WTC11 (cell line): ENCODE measurements at regions of chr9 and their contacts with region 1.

Region 1: DNA sequence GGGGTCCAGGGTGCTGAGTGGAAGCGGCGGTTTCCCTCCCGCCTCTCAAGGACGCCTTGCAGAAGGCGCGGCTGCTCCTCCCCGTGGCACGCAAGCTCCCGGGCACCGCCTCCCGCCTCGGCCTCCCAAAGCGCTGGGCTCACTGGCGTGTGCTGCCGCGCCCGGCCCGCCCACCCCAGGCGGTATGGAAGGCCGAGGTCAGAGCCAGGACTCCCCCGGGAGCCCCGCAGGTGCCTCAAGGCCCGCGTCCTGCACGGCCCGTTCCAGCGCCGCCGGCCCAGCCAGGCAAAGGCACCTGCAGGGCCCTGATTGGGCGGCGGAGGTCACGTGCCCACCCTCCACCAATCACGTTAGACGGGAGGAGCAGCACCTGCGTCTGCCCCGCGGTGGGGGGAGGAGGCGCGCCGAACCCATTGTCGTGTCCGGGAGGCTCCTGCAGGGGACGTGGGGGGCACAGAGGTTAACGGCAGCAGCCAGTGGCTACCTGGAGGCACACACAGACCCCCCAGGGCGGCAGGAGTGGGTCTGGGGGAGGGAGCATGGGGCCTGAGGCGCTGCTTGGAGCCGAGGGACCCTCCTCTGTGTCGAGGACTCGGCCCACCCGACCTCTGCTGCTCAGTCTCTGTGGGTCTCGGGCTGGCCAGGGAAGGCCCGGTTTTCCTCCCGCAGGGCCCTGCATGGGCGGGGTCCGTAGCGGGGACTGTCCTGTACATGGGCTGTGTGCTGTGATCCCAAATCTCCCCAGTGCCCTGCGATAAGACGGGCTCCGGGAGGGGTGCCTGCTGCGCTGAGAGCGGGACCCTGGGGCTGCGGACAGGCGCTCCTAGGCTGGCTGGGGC is 2.0 kb upstream of the LCN12 start:
- DNase-seq: peak; percentile 97
- ATAC-seq: peak; percentile 81
- H3K4me3 Mint-ChIP-seq: peak overlapping the region; percentile 72
- H3K27ac Mint-ChIP-seq: no peak overlapping the region
- H3K4me1 Mint-ChIP-seq: peaks cover 7% of the 10 kb centered on the region
- H3K27me3 Mint-ChIP-seq: no peaks in the 10 kb centered on the region
- CTCF ChIP-seq: no peak

Region 2: GRCh38 chr9:136865735-136866103 is 84.3 kb before region 1 on chr9:
- CTCF ChIA-PET with region 1: no interaction called
- POLR2A ChIA-PET with region 1: no interaction called
- DNase-seq: no peak
- ATAC-seq: peak; percentile 30
- H3K4me3 Mint-ChIP-seq: peak overlapping the region; percentile 71
- H3K27ac Mint-ChIP-seq: no peak overlapping the region
- H3K4me1 Mint-ChIP-seq: peaks cover 4% of the 10 kb centered on the region
- H3K27me3 Mint-ChIP-seq: peaks cover 11% of the 10 kb centered on the region
- CTCF ChIP-seq: no peak

Region 3: DNA sequence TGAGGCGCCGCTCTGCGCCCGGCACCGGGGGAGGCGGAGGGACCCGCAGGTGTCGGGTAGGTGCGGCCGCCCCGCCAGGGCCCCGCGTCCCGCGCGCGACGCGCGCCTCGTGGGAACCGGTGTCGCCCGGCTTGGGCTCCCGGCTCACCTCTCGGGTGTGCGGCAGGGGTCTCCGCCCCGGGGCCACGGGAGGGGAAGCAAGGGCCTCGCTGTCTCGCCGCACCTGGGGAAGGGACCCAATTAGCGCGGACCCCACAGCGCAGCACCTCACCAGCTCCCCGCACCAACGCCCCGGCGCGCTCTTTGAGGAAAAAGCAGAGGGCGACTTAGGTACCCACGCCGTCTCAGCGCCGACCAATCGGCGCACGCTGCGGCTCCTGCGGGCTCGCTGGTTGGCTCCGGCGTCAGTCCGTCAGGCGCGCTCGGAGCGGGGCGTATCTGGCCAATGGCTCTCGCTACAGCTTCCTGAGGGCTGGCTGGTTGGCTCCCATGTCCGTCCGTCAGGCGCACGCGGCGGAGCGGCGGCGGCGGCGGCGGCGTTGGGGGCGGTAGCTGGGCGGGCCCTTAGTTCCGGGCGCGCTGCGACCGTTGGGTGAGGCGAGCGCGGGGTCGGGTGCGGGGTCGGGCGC is 64.0 kb before region 1 on chr9 and contains the start of gene TRAF2:
- CTCF ChIA-PET with region 1: interaction called, 12 read pairs
- POLR2A ChIA-PET with region 1: no interaction called
- DNase-seq: peak; percentile 98
- ATAC-seq: peak; percentile 97
- H3K4me3 Mint-ChIP-seq: peak within 1 kb of the TSS; percentile 76
- H3K27ac Mint-ChIP-seq: peak within 1 kb of the TSS; percentile 60; the same call in 1 of the 2 replicates
- H3K4me1 Mint-ChIP-seq: peaks cover 9% of the 10 kb centered on the region
- H3K27me3 Mint-ChIP-seq: no peaks in the 10 kb centered on the region
- CTCF ChIP-seq: no peak
- total RNA-seq, gene TRAF2: 55.0 to 62.5 TPM (median 61.3 TPM) in 3 replicates

Region 4: DNA sequence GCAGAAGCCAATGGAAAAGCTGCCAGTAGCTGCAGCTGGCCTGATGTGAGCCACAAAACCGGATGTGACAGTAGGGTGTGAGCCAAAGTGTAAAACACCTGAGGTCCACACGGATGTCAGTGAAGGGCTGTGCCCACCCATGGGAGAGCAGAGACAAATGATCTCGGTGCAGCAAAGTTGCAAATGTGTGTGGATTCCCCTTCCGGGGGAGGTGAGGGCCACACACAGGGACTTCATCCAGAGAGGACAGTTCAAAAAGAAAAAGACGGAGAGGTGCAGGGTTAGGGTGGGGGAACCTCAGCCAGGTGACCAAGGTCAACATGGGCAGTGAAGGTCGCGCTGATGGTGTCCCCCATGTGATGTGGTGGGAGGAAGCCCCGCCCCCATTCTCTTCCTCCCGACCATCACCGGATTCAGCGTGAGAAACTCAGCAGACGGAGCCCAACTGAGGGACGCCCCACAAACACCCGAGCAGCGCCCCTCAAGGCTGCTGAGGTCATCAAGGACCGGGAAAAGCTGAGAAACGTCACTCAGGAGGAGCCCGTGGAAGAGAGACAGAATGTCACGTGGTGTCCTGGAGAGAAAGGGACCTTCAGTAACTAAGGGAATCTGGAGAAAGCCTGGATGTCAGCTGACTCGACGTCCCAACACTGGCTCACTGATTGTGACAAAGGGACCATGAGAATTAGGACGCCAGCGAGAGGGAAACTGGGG is 15.9 kb after region 1 on chr9:
- CTCF ChIA-PET with region 1: interaction called, 17 read pairs
- POLR2A ChIA-PET with region 1: no interaction called
- DNase-seq: no peak
- ATAC-seq: no peak
- H3K4me3 Mint-ChIP-seq: no peak overlapping the region
- H3K27ac Mint-ChIP-seq: peak overlapping the region; percentile 66; the same call in 1 of the 2 replicates
- H3K4me1 Mint-ChIP-seq: peaks cover 10% of the 10 kb centered on the region
- H3K27me3 Mint-ChIP-seq: no peaks in the 10 kb centered on the region
- CTCF ChIP-seq: no peak

Region 5: GRCh38 chr9:136985027-136985602 is 35.1 kb after region 1 on chr9:
- CTCF ChIA-PET with region 1: interaction called, 23 read pairs
- POLR2A ChIA-PET with region 1: interaction called, 5 read pairs
- DNase-seq: no peak
- ATAC-seq: peak; percentile 41
- H3K4me3 Mint-ChIP-seq: peak overlapping the region; percentile 49
- H3K27ac Mint-ChIP-seq: no peak overlapping the region
- H3K4me1 Mint-ChIP-seq: no peaks in the 10 kb centered on the region
- H3K27me3 Mint-ChIP-seq: peaks cover 38% of the 10 kb centered on the region
- CTCF ChIP-seq: no peak

Region 6: GRCh38 chr9:137000177-137000883 is 50.3 kb after region 1 on chr9:
- CTCF ChIA-PET with region 1: interaction called, 18 read pairs
- POLR2A ChIA-PET with region 1: no interaction called
- DNase-seq: no peak
- ATAC-seq: no peak
- H3K4me3 Mint-ChIP-seq: no peak overlapping the region
- H3K27ac Mint-ChIP-seq: no peak overlapping the region
- H3K4me1 Mint-ChIP-seq: 0 out of 2 replicates have a peak, but pooled peaks cover 4% of the 10 kb centered on the region
- H3K27me3 Mint-ChIP-seq: peaks cover 6% of the 10 kb centered on the region; the same call in 1 of the 2 replicates
- CTCF ChIP-seq: no peak